MCF 10A (cell line): ENCODE measurements at regions of chr5 and their contacts with region 1.

Region 1: DNA sequence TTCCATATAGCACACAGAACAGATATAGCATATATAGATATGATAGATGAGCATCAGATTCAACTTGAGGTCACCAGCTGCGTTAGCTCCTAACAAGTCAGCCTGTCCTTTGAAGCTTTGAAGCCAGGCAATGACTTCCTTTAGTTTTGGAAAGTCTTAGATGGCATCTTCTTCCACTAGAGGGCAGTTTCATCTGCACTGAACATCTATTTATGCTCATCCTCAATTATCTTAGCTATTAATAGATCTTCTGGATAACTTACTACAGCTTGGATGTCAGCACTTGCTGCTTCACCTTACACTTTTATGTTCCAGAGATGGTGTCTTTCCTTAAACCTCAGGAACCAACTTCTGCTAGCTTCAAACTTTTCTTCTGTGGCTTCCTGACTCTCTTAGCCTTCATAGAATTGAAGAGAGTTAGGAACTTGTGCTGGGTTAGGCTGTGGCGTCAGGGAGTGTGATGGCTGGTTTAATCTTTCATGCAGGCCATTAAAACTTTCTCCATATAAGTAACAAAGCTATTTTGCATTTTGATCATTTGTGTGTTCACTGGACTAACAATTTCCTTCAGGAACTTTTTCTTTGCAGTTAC is 1401.4 kb downstream of the EFNA5 start:
- DNase-seq: peak; percentile 41
- H3K4me3 Mint-ChIP-seq: no peak overlapping the region
- H3K27ac Mint-ChIP-seq: no peak overlapping the region
- H3K4me1 Mint-ChIP-seq: no peaks in the 10 kb centered on the region
- H3K27me3 Mint-ChIP-seq: no peaks in the 10 kb centered on the region
- CTCF ChIP-seq: peak; percentile 57

Region 2: DNA sequence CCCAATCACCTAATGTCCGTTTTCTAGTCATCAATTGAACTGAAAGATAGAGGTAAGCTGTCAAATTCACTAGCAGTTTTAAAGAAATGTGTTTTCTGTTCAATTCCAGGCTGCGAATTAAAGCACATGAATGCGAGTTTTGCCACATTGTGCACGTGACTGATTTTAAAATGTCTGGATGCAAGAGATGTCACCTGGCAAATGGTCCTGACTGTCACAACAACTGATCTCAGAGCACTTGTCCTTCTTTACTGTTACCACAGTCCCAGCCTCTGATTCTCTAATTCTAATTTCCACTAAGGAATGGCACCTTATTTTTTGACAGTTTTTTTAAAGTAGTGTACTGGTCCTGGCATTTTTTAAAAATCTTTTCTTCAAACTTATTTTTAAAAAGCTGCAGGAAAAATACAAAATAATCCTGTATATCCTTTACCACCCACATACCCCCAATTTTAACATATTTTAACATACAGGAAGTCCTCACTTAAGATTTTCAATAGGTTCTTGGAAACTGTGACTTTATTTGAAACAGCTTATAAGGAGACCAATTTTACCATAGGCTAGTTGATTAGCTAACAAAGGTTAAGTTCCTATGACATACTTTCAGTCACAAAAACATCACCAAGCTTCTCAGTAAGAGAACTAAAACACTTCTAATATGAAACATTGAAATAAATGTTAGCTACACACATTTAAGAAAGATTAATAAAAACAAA is 37.1 kb after region 1 on chr5:
- CTCF ChIA-PET with region 1: no interaction called
- POLR2A ChIA-PET with region 1: no interaction called
- intact Hi-C with region 1: no loop called
- DNase-seq: no peak
- H3K4me3 Mint-ChIP-seq: no peak overlapping the region
- H3K27ac Mint-ChIP-seq: no peak overlapping the region
- H3K4me1 Mint-ChIP-seq: no peaks in the 10 kb centered on the region
- H3K27me3 Mint-ChIP-seq: no peaks in the 10 kb centered on the region
- CTCF ChIP-seq: no peak

Region 3: GRCh38 chr5:106361905-106362304 is 92.6 kb after region 1 on chr5:
- CTCF ChIA-PET with region 1: no interaction called
- POLR2A ChIA-PET with region 1: no interaction called
- intact Hi-C with region 1: no loop called
- DNase-seq: no peak
- H3K4me3 Mint-ChIP-seq: no peak overlapping the region
- H3K27ac Mint-ChIP-seq: no peak overlapping the region
- H3K4me1 Mint-ChIP-seq: no peaks in the 10 kb centered on the region
- H3K27me3 Mint-ChIP-seq: no peaks in the 10 kb centered on the region
- CTCF ChIP-seq: no peak

Region 4: DNA sequence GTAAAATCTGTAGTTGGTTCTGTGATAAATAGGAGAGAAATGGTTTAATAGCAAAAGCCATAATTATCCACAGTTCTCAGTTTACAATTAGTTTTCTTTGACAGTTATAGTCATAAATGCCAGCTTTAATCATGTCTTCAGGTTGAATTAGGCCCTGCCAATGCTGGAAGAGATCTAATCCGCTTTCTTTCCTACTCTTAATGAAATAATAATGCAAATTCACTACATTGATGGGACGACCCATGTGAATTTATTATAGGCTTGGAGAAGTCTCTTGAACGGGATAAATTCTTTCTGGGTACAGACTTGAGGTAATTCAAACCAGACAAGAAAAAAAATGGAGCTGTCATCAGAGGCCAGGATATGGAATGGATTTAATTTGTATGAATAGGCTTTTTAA is 451.0 kb after region 1 on chr5:
- CTCF ChIA-PET with region 1: no interaction called
- POLR2A ChIA-PET with region 1: no interaction called
- intact Hi-C with region 1: loop called (anchors 10 kb)
- DNase-seq: no peak
- H3K4me3 Mint-ChIP-seq: no peak overlapping the region
- H3K27ac Mint-ChIP-seq: no peak overlapping the region
- H3K4me1 Mint-ChIP-seq: no peaks in the 10 kb centered on the region
- H3K27me3 Mint-ChIP-seq: peaks cover 11% of the 10 kb centered on the region
- CTCF ChIP-seq: no peak

Region 5: DNA sequence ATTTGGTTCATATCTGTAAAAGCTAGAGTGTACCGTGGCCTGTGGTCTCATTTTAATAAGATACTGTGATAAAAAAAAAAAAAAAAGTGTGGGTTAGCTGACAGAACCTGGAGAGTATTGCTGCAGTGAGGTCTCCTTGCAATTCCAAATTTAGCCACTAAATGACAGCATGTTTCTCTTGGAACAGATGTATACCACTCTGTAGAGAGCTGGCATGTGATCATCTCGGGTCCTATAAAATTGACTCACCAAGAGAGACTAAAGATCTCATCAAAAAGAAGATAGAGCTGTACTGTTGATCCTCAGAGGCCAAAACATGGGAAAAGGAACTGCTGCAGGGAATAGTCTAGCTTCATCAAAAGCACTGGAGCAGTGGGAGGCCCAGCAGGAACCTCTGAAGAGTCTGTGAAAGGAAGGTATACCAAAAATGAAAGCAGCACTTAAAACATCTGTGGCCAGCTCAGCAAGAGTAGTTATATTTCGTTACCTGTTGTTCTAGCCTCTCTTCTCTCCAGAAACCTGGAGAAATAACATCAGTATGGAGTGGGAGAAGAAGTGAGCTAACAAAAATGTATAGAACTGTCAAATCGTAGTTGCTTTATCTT is 574.6 kb after region 1 on chr5:
- CTCF ChIA-PET with region 1: interaction called, 10 read pairs
- POLR2A ChIA-PET with region 1: no interaction called
- intact Hi-C with region 1: no loop called
- DNase-seq: peak; percentile 32
- H3K4me3 Mint-ChIP-seq: no peak overlapping the region
- H3K27ac Mint-ChIP-seq: peak overlapping the region; percentile 4
- H3K4me1 Mint-ChIP-seq: peaks cover 5% of the 10 kb centered on the region
- H3K27me3 Mint-ChIP-seq: peaks cover 10% of the 10 kb centered on the region
- CTCF ChIP-seq: peak; percentile 26

Region 6: DNA sequence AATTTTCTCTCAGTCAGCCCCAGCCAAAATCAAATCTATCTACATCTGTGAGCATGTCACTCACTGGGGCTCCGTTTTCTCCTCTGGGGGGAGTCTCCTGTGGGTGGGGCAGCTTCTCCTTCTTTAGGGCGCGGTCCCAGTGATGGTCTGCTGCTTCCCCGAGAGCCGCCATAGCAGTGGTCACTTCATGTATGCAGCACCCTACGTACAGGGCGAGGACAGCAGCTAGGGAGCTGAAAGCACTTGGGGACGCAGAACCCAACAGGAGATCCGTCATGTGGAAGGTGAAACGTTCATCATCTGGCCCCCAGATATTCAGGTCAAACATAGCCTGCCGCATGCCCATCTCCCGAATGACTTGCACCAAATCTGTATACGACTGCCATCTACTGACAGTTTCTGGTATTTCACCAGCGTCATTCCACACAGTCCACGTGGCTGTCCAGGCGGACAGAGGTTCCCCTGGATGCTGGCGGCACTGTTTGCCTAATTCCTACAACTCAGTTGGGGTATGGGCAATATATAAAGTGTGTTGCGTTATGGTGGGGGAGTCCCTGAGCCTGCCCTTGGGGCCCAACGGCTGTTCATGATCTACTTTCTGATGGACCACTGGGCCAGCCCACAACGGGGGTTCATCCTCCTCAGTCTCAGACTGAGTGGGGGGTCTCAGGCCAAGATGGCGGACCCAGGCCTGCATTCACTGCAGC is 606.4 kb after region 1 on chr5:
- CTCF ChIA-PET with region 1: interaction called, 3 read pairs
- POLR2A ChIA-PET with region 1: no interaction called
- intact Hi-C with region 1: loop called (anchors 1 kb)
- DNase-seq: peak; percentile 81
- H3K4me3 Mint-ChIP-seq: no peak overlapping the region
- H3K27ac Mint-ChIP-seq: no peak overlapping the region
- H3K4me1 Mint-ChIP-seq: peaks cover 14% of the 10 kb centered on the region
- H3K27me3 Mint-ChIP-seq: no peaks in the 10 kb centered on the region
- CTCF ChIP-seq: peak; percentile 60

Region 7: GRCh38 chr5:107248066-107248695 is 978.8 kb after region 1 on chr5:
- CTCF ChIA-PET with region 1: interaction called, 13 read pairs
- POLR2A ChIA-PET with region 1: no interaction called
- intact Hi-C with region 1: loop called (anchors 1 kb)
- DNase-seq: peak; percentile 67
- H3K4me3 Mint-ChIP-seq: no peak overlapping the region
- H3K27ac Mint-ChIP-seq: no peak overlapping the region
- H3K4me1 Mint-ChIP-seq: no peaks in the 10 kb centered on the region
- H3K27me3 Mint-ChIP-seq: no peaks in the 10 kb centered on the region
- CTCF ChIP-seq: peak; percentile 72